GM12878 (cell line): ENCODE measurements at regions of chr4 and their contacts with region 1.

Region 1: GRCh38 chr4:86961605-86962295 is 26.9 kb downstream of the AFF1 start:
- DNase-seq: peak; percentile 85
- ATAC-seq: peak; percentile 92
- H3K4me3 ChIP-seq: peak overlapping the region; percentile 61; the same call in 1 of the 2 replicates
- H3K27ac ChIP-seq: peak overlapping the region; percentile 80
- H3K4me1 ChIP-seq: peaks cover 70% of the 10 kb centered on the region
- H3K27me3 ChIP-seq: no peaks in the 10 kb centered on the region
- CTCF ChIP-seq: no peak
- EP300 ChIP-seq: peak; percentile 79 to 84; a peak in 3 of 4 replicates
- POLR2A ChIP-seq: peak; percentile 63
- RAD21 ChIP-seq: no peak

Region 2: DNA sequence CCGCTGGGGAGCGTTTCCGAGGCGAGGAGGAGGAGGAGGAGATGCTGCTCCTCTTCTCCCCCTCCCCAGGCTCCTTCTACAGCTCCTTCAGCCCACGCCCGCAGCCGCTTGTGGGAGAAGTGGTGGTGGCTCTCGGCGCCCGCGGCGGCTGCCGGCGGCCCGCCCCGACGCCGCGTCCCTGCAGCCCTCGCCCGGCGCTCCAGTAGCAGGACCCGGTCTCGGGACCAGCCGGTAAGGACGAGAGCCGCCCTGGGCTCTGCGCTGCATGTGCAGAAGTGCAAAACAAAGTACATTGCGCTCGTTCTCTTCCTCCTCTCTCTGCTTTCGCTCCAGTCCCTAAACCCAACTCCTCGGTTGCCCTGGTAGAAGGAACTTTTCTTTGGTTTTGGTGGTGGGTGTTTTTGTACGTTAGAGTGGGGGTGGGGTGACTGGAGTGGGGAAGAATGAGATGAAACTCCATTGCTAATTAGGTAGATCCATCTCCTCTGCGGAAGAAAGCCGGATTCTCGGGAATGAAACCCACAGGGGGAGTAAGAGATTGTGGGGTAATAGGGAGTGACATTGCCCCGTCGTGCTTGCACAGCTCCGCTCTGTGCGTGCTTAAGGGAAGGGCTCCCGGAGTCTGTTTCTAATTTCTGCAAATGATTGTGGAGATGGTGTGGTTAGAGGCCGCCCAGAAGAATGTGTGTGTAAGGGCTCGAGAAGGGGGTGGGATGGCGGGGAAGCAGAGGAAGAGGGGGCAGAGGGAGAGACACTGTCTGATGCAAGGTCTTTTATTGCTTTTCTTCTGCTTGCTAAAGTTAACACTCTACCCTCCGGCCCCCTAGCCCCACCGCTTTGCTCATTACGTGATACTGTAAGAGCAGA is 367.0 kb before region 1 on chr4:
- CTCF ChIA-PET with region 1: no interaction called
- POLR2A ChIA-PET with region 1: no interaction called
- RAD21 ChIA-PET with region 1: no interaction called
- SMC1A ChIA-PET with region 1: no interaction called
- in situ Hi-C with region 1: no loop called
- intact Hi-C with region 1: no loop called
- DNase-seq: no peak
- ATAC-seq: peak; percentile 34
- H3K4me3 ChIP-seq: peak overlapping the region; percentile 48; the same call in 1 of the 2 replicates
- H3K27ac ChIP-seq: no peak overlapping the region
- H3K4me1 ChIP-seq: no peaks in the 10 kb centered on the region
- H3K27me3 ChIP-seq: peaks cover 0 to 5% of the 10 kb centered on the region in 2 experiments; a peak in 1 of 4 replicates
- CTCF ChIP-seq: peak in 2 of 3 experiments; percentile 8 to 31; a peak in 1 of 6 replicates
- EP300 ChIP-seq: no peak
- POLR2A ChIP-seq: no peak
- RAD21 ChIP-seq: no peak

Region 3: DNA sequence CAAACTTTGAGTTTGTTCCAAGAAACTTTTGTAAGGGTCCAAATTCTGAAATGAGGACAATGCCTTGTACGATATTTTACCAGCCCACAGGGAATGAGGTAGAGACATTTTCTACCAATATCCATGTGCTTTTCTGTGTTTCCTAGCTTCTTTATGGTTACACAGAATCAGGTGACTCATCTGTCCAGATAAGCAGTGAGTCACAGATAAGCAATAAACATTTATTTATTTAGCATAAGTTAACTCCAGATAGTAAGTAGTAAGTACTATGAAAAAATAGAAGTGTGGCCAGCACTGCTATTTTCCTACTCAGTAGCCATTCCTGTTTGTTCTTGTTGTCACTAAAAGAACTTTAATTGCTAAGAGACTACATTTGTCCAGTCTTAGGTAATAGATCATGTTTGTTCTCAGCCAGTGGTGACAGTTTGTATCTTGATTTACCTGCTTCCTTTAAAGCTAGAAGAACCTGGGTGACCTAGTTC is 19.5 kb before region 1 on chr4:
- CTCF ChIA-PET with region 1: interaction called, 45 read pairs
- POLR2A ChIA-PET with region 1: interaction called, 107 read pairs
- RAD21 ChIA-PET with region 1: interaction called, 103 read pairs
- SMC1A ChIA-PET with region 1: interaction called, 192 read pairs
- in situ Hi-C with region 1: no loop called
- intact Hi-C with region 1: loop called (anchors 1 kb)
- DNase-seq: no peak
- ATAC-seq: no peak
- H3K4me3 ChIP-seq: peak overlapping the region; percentile 15; the same call in 1 of the 2 replicates
- H3K27ac ChIP-seq: no peak overlapping the region
- H3K4me1 ChIP-seq: peaks cover 45% of the 10 kb centered on the region
- H3K27me3 ChIP-seq: no peaks in the 10 kb centered on the region
- CTCF ChIP-seq: no peak
- EP300 ChIP-seq: no peak
- POLR2A ChIP-seq: no peak
- RAD21 ChIP-seq: no peak

Region 4: DNA sequence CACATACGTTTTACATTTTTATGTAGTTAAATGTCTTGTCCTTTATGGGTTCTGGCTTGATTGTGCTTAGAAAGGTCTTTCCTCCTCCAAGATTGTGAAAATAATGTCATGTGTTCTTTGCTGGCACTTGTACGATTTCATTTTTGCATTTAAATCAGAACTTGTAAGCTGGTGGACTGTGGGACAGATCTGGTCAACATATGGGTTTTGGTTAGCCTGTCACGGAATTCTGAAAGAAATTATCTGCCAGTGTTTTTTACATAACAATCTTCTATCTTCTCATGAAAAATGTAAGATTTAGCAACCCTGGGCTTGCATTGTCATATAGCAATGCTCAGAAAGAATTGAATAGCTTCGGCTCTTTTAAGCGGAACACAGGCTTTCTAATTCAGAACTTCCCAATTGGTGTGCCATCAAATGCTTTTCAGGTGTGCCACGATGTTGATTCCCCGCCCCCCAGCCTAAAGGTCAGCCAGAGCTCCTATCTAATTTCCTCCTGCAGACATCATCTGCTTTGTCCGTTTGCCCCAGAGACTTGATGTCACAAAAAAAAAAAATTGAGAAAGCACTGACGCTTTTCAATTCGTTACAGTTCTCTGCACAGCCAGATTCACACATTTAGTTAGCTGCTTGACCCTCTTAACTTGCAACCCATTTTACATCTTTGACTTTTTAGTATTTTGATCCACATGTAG is 10.8 kb before region 1 on chr4:
- CTCF ChIA-PET with region 1: interaction called, 8 read pairs
- POLR2A ChIA-PET with region 1: interaction called, 12 read pairs
- RAD21 ChIA-PET with region 1: interaction called, 9 read pairs
- SMC1A ChIA-PET with region 1: interaction called, 192 read pairs
- in situ Hi-C with region 1: no loop called
- intact Hi-C with region 1: no loop called
- DNase-seq: no peak
- ATAC-seq: no peak
- H3K4me3 ChIP-seq: no peak overlapping the region
- H3K27ac ChIP-seq: no peak overlapping the region
- H3K4me1 ChIP-seq: peaks cover 21% of the 10 kb centered on the region
- H3K27me3 ChIP-seq: no peaks in the 10 kb centered on the region
- CTCF ChIP-seq: no peak
- EP300 ChIP-seq: no peak
- POLR2A ChIP-seq: no peak
- RAD21 ChIP-seq: no peak

Region 5: GRCh38 chr4:86977621-86978184 is 16.0 kb after region 1 on chr4:
- CTCF ChIA-PET with region 1: interaction called, 4 read pairs
- POLR2A ChIA-PET with region 1: interaction called, 25 read pairs
- RAD21 ChIA-PET with region 1: interaction called, 30 read pairs
- SMC1A ChIA-PET with region 1: interaction called, 15 read pairs
- in situ Hi-C with region 1: no loop called
- intact Hi-C with region 1: no loop called
- DNase-seq: peak; percentile 67
- ATAC-seq: peak; percentile 96
- H3K4me3 ChIP-seq: peak overlapping the region; percentile 31; the same call in 1 of the 2 replicates
- H3K27ac ChIP-seq: peak overlapping the region; percentile 55
- H3K4me1 ChIP-seq: peaks cover 41% of the 10 kb centered on the region
- H3K27me3 ChIP-seq: no peaks in the 10 kb centered on the region
- CTCF ChIP-seq: no peak
- EP300 ChIP-seq: peak in 1 of 2 experiments; percentile 74; a peak in 1 of 4 replicates
- POLR2A ChIP-seq: no peak
- RAD21 ChIP-seq: no peak